Activated B cell treated with CpG ODN at 0.5 μM for 24 hours (primary cell): ENCODE measurements at regions of chr3 and their contacts with region 1.

Region 1: GRCh38 chr3:176120507-176120906 is 1076.8 kb downstream of the TBL1XR1 start:
- DNase-seq: no peak
- ATAC-seq: no peak
- H3K4me3 Mint-ChIP-seq: no peak overlapping the region
- H3K27ac Mint-ChIP-seq: no peak overlapping the region
- H3K4me1 Mint-ChIP-seq: no peaks in the 10 kb centered on the region
- H3K27me3 Mint-ChIP-seq: no peaks in the 10 kb centered on the region
- CTCF ChIP-seq: no peak

Region 2: DNA sequence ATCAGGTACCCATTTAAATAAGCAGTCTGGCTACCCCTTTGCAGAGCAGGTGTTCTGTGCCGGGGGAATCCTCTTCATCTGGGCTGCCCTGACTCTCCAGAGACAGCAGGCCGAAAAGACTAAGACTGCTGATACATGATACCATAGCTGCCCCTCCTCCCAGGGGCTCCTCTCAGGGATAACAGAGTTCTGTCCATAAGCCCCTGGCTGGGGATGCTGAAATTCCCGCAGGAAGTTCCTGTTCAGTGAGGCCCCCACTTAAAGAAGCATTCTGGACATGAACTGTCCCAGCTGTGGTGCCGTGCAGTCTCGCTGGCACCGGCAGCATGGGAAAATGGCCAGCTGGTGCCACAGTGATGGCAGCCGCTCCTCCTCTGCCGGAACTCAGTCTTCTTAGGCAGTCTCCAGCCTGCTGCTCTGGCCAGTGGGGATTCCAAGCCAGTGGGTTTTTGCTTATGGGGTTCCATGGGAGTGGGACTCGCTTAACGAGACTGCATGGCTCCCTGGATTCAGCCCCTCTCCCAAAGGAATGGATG is 235.2 kb before region 1 on chr3:
- CTCF ChIA-PET with region 1: no interaction called
- POLR2A ChIA-PET with region 1: no interaction called
- intact Hi-C with region 1: no loop called
- DNase-seq: no peak
- ATAC-seq: no peak
- H3K4me3 Mint-ChIP-seq: no peak overlapping the region
- H3K27ac Mint-ChIP-seq: no peak overlapping the region
- H3K4me1 Mint-ChIP-seq: no peaks in the 10 kb centered on the region
- H3K27me3 Mint-ChIP-seq: no peaks in the 10 kb centered on the region
- CTCF ChIP-seq: no peak

Region 3: GRCh38 chr3:176005564-176005963 is 114.9 kb before region 1 on chr3:
- CTCF ChIA-PET with region 1: no interaction called
- POLR2A ChIA-PET with region 1: no interaction called
- intact Hi-C with region 1: no loop called
- DNase-seq: no peak
- ATAC-seq: no peak
- H3K4me3 Mint-ChIP-seq: no peak overlapping the region
- H3K27ac Mint-ChIP-seq: no peak overlapping the region
- H3K4me1 Mint-ChIP-seq: no peaks in the 10 kb centered on the region
- H3K27me3 Mint-ChIP-seq: no peaks in the 10 kb centered on the region
- CTCF ChIP-seq: no peak

Region 4: DNA sequence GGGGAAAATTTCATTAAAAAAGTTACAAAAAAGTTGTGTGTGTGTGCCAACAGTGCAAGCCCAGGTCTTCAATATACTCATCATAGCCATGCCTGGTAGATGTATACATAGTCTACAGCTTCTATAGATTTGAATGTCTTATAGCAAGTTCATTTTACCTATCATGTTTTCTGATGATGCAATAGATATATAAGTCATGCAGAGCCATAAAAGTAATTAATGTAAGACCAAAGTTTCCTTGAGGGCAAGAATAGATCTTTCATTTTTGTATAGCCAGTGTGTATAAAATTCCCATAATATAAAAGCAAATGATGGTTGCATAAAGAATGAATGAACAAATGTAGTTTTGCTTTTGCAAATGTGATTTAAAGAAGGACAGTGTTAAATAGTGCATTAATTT is 61.6 kb before region 1 on chr3:
- CTCF ChIA-PET with region 1: no interaction called
- POLR2A ChIA-PET with region 1: no interaction called
- intact Hi-C with region 1: no loop called
- DNase-seq: no peak
- ATAC-seq: no peak
- H3K4me3 Mint-ChIP-seq: no peak overlapping the region
- H3K27ac Mint-ChIP-seq: no peak overlapping the region
- H3K4me1 Mint-ChIP-seq: no peaks in the 10 kb centered on the region
- H3K27me3 Mint-ChIP-seq: no peaks in the 10 kb centered on the region
- CTCF ChIP-seq: no peak

Region 5: DNA sequence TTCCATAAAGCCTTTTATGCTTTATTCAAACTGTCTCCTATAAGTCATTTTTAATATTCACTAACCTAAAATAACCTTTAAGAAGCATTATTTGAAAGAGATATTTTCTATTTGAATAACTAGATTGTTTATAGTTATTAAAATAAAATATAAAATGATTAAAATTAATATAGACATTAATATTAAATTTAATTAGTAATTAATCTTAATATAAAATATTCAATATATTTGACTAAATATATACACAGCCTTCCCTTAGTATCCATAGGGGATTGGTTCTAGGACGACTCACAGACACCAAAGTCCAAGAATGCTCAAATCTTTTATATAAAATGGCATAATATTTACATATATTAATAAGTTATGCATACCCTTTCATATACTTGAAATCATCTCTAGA is 62.7 kb after region 1 on chr3:
- CTCF ChIA-PET with region 1: no interaction called
- POLR2A ChIA-PET with region 1: no interaction called
- intact Hi-C with region 1: loop called (anchors 10 kb)
- DNase-seq: no peak
- ATAC-seq: no peak
- H3K4me3 Mint-ChIP-seq: no peak overlapping the region
- H3K27ac Mint-ChIP-seq: no peak overlapping the region
- H3K4me1 Mint-ChIP-seq: no peaks in the 10 kb centered on the region
- H3K27me3 Mint-ChIP-seq: no peaks in the 10 kb centered on the region
- CTCF ChIP-seq: no peak